Prostate gland (tissue), 2 donors: ENCODE measurements at regions of chr12 and their contacts with region 1.

Region 1: DNA sequence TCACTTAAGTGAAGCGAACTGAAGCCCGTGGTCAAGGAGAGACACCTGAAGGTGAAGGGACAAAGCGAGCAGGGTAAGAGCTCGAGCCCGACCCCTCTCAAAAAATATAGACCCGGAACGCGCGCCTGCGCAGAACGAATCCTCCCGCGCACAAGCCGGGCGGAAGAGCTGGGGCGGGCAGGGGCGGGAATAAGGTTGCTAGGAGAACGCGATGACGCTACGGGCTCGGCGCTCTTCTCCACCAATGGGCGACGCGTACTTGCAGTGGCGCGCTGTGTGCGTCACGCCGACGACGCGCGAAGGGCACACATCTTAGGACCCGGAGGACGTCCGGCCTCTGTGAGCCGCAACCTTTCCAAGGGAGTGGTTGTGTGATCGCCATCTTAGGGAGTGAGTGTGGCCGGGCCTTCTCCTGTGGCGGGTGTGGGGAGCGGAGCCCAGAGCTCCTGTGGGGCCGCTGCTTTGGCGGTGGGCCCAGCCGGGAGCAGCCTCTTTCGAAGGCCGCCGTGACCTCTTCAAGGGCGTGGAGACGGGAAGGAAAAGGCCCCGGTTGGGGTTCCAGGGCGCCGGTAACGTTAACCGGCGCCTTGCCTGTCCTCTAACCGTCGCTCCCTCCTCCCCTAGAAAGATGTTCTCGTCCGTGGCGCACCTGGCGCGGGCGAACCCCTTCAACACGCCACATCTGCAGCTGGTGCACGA is at the start of gene SLC25A3:
- DNase-seq: peak; percentile 97
- H3K4me3 ChIP-seq: peak within 1 kb of the TSS; percentile 90 to 98
- H3K27ac ChIP-seq: peak within 1 kb of the TSS; percentile 95 to 97
- H3K4me1 ChIP-seq: no peaks in the 10 kb centered on the region
- H3K27me3 ChIP-seq: no peaks in the 10 kb centered on the region
- CTCF ChIP-seq: no peak
- POLR2A ChIP-seq: peak; percentile 94
- total RNA-seq, gene SLC25A3: 376 to 489 TPM

Region 2: GRCh38 chr12:98490501-98491453 is 102.7 kb before region 1 on chr12:
- intact Hi-C with region 1: loop called (anchors 10 kb)
- DNase-seq: peak; percentile 75
- H3K4me3 ChIP-seq: no peak overlapping the region
- H3K27ac ChIP-seq: no peak overlapping the region
- H3K4me1 ChIP-seq: no peaks in the 10 kb centered on the region
- H3K27me3 ChIP-seq: no peaks in the 10 kb centered on the region
- CTCF ChIP-seq: peak; percentile 67 to 90 (median 81)
- POLR2A ChIP-seq: no peak

Region 3: GRCh38 chr12:98644711-98645402 is 51.4 kb after region 1 on chr12 and contains the starts of genes APAF1 and IKBIP:
- intact Hi-C with region 1: loop called (anchors 2 kb)
- DNase-seq: peak; percentile 98
- H3K4me3 ChIP-seq: peak within 1 kb of the TSS; percentile 97 to 98
- H3K27ac ChIP-seq: peak within 1 kb of the TSS; percentile 88 to 89
- H3K4me1 ChIP-seq: no peaks in the 10 kb centered on the region
- H3K27me3 ChIP-seq: no peaks in the 10 kb centered on the region
- CTCF ChIP-seq: no peak
- POLR2A ChIP-seq: peak; percentile 94
- total RNA-seq, gene APAF1: 9.4 to 11.6 TPM
- total RNA-seq, gene IKBIP: 6.0 to 6.5 TPM